ENCODE measurements at regions of chr16 and their contacts with region 1.

Region 1: DNA sequence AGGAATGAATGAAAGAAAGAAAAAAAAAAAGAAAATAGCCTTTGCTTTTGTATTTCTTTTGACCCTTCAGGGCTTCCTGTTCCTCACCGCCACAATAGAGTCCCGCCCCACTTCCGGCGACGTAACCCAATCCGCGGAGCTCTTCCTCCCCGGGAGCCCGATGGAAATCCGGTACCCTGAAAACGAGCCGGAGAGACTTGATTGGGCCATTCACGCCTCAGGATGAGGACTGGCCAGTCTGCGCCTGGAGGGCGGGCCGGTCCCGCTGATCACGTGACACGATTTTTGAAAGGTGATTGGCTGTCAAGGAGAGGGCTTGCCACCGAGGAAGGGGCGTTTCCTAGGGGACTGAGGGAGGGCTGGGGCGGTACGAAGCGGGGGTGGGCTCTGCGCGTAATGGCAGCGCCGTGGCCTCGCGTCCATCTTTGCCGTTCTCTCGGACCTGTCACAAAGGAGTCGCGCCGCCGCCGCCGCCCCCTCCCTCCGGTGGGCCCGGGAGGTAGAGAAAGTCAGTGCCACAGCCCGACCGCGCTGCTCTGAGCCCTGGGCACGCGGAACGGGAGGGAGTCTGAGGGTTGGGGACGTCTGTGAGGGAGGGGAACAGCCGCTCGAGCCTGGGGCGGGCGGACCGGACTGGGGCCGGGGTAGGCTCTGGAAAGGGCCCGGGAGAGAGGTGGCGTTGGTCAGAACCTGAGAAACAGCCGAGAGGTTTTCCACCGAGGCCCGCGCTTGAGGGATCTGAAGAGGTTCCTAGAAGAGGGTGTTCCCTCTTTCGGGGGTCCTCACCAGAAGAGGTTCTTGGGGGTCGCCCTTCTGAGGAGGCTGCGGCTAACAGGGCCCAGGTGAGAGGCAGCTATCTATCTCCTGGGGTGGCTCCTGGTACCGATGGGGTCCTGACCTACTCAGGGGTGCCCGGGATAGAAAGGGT is at the starts of genes PSME3IP1 and RSPRY1:
- DNase-seq: peak; percentile 86 to 100 (median 99)
- ATAC-seq: peak; percentile 92
- H3K4me3 ChIP-seq: peak within 1 kb of the TSS; percentile 95
- H3K4me3 Mint-ChIP-seq: peak within 1 kb of the TSS; percentile 93 to 100 (median 98)
- H3K27ac ChIP-seq: peak within 1 kb of the TSS; percentile 94
- H3K27ac Mint-ChIP-seq: peak within 1 kb of the TSS; percentile 93 to 99 (median 95)
- H3K4me1 ChIP-seq: peaks cover 20 to 24% of the 10 kb centered on the region in 2 donors
- H3K4me1 Mint-ChIP-seq: peaks cover 41 to 77% (median 59%) of the 10 kb centered on the region in 7 donors
- H3K27me3 ChIP-seq: no peaks in the 10 kb centered on the region
- H3K27me3 Mint-ChIP-seq: peaks cover 0 to 3% (median 0%) of the 10 kb centered on the region in 5 donors
- total RNA-seq, gene PSME3IP1: 109 to 159 (median 140) TPM
- total RNA-seq, gene RSPRY1: 24.1 to 40.5 (median 33.6) TPM

Region 2: DNA sequence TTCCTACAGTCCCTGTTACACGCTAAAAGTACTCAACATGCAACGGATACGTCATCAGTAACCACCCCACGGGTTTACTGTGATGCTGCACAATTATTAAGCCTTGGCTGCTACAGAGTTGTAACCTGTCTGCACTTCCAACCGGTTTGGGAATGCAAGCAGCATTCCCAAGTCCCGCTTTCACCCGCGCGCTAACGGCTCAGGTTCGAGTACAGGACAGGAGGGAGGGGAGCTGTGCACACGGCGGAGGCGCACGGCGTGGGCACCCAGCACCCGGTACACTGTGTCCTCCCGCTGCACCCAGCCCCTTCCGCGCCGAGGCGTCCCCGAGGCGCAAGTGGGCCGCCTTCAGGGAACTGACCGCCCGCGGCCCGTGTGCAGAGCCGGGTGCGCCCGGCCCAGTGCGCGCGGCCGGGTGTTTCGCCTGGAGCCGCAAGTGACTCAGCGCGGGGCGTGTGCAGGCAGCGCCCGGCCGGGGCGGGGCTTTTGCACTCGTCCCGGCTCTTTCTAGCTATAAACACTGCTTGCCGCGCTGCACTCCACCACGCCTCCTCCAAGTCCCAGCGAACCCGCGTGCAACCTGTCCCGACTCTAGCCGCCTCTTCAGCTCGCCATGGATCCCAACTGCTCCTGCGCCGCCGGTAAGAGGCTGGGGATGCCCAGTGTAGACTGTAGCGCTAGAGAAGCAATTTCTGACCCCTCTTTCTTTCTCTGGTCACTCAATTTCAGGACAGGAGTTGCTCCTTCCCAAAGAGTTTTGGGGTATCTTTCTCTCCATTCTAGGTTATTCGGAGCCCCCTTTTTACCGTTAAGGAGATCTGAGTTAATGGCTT is 577.9 kb before region 1 on chr16 and contains the start of gene MT2A:
- CTCF ChIA-PET with region 1: no interaction called
- POLR2A ChIA-PET with region 1: no interaction called
- intact Hi-C with region 1: loop called in 1 of 2 experiments (anchors 5 kb)
- DNase-seq: peak; percentile 70 to 89 (median 84)
- ATAC-seq: peak; percentile 88
- H3K4me3 ChIP-seq: peak within 1 kb of the TSS; percentile 97
- H3K4me3 Mint-ChIP-seq: peak within 1 kb of the TSS; percentile 85 to 100 (median 96)
- H3K27ac ChIP-seq: peak within 1 kb of the TSS; percentile 94
- H3K27ac Mint-ChIP-seq: peak within 1 kb of the TSS; percentile 85 to 99 (median 93)
- H3K4me1 ChIP-seq: peaks cover 29 to 34% of the 10 kb centered on the region in 2 donors
- H3K4me1 Mint-ChIP-seq: peaks cover 35 to 52% (median 47%) of the 10 kb centered on the region in 7 donors
- H3K27me3 ChIP-seq: no peaks in the 10 kb centered on the region
- H3K27me3 Mint-ChIP-seq: no peaks in the 10 kb centered on the region
- total RNA-seq, gene MT2A: 15.0 to 435 (median 32.8) TPM

Region 3: GRCh38 chr16:57013229-57013628 is 173.0 kb before region 1 on chr16:
- CTCF ChIA-PET with region 1: no interaction called
- POLR2A ChIA-PET with region 1: no interaction called
- intact Hi-C with region 1: loop called in 1 of 2 experiments (anchors 1 kb)
- DNase-seq: no peak
- ATAC-seq: no peak
- H3K4me3 ChIP-seq: peak overlapping the region; percentile 24
- H3K4me3 Mint-ChIP-seq: peak overlapping the region in 9 of 10 donors; percentile 36 to 87 (median 72)
- H3K27ac ChIP-seq: peak overlapping the region; percentile 80
- H3K27ac Mint-ChIP-seq: peak overlapping the region; percentile 88 to 98 (median 94)
- H3K4me1 ChIP-seq: peaks cover 81 to 83% of the 10 kb centered on the region in 2 donors
- H3K4me1 Mint-ChIP-seq: peaks cover 53 to 94% (median 82%) of the 10 kb centered on the region in 7 donors
- H3K27me3 ChIP-seq: no peaks in the 10 kb centered on the region
- H3K27me3 Mint-ChIP-seq: no peaks in the 10 kb centered on the region

Region 4: GRCh38 chr16:57213462-57213861 is 27.3 kb after region 1 on chr16:
- CTCF ChIA-PET with region 1: no interaction called
- POLR2A ChIA-PET with region 1: no interaction called
- intact Hi-C with region 1: no loop called
- DNase-seq: no peak
- ATAC-seq: no peak
- H3K4me3 ChIP-seq: no peak overlapping the region
- H3K4me3 Mint-ChIP-seq: no peak overlapping the region
- H3K27ac ChIP-seq: no peak overlapping the region
- H3K27ac Mint-ChIP-seq: peak overlapping the region in 1 of 9 donors; percentile 22
- H3K4me1 ChIP-seq: no peaks in the 10 kb centered on the region
- H3K4me1 Mint-ChIP-seq: peaks cover 0 to 5% (median 0%) of the 10 kb centered on the region in 7 donors
- H3K27me3 ChIP-seq: no peaks in the 10 kb centered on the region
- H3K27me3 Mint-ChIP-seq: no peaks in the 10 kb centered on the region

Region 5: DNA sequence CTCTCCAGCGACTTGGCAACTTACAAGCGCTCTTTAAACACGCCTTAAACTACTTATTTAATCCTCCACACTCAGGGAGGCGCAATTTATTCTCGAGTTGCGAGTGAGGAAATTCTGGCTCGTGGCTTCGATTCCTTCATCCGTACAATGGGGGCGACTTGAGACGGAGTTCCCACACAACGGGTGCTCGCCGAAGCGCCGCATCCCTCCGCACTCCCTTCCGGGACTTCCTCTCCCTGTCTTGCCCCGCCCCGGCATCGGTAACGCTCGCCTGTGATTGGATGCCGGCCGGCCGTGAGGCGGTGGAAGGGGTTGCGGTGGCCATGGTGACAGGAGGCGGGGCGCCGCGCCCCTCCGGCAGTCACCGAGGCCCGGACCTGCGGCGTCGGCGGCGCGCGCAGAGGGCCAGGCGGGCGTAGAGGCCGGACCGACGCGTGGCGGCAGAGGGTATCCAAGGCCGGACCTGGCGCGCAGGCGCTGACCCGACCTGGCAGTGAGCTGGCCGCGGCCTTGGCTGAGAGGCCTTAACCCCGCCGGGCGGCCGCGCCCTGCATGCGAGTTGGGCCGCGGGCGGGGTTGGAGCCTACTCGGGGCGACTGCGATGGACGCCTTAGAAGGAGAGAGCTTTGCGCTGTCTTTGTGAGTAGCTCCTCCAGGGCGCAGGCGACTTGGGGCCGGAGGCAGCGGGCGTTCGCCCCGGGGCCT is 58.7 kb after region 1 on chr16 and contains the start of gene ARL2BP:
- CTCF ChIA-PET with region 1: no interaction called
- POLR2A ChIA-PET with region 1: interaction called, 7 read pairs
- intact Hi-C with region 1: loop called (anchors 1 kb)
- DNase-seq: peak; percentile 90 to 98 (median 96)
- ATAC-seq: peak; percentile 97
- H3K4me3 ChIP-seq: peak within 1 kb of the TSS; percentile 44
- H3K4me3 Mint-ChIP-seq: peak within 1 kb of the TSS; percentile 81 to 97 (median 89)
- H3K27ac ChIP-seq: peak within 1 kb of the TSS; percentile 84
- H3K27ac Mint-ChIP-seq: peak within 1 kb of the TSS; percentile 88 to 97 (median 93)
- H3K4me1 ChIP-seq: peaks cover 5 to 6% of the 10 kb centered on the region in 2 donors
- H3K4me1 Mint-ChIP-seq: peaks cover 14 to 25% (median 17%) of the 10 kb centered on the region in 7 donors
- H3K27me3 ChIP-seq: no peaks in the 10 kb centered on the region
- H3K27me3 Mint-ChIP-seq: no peaks in the 10 kb centered on the region
- total RNA-seq, gene ARL2BP: 32.6 to 57.7 (median 37.9) TPM

Region 6: DNA sequence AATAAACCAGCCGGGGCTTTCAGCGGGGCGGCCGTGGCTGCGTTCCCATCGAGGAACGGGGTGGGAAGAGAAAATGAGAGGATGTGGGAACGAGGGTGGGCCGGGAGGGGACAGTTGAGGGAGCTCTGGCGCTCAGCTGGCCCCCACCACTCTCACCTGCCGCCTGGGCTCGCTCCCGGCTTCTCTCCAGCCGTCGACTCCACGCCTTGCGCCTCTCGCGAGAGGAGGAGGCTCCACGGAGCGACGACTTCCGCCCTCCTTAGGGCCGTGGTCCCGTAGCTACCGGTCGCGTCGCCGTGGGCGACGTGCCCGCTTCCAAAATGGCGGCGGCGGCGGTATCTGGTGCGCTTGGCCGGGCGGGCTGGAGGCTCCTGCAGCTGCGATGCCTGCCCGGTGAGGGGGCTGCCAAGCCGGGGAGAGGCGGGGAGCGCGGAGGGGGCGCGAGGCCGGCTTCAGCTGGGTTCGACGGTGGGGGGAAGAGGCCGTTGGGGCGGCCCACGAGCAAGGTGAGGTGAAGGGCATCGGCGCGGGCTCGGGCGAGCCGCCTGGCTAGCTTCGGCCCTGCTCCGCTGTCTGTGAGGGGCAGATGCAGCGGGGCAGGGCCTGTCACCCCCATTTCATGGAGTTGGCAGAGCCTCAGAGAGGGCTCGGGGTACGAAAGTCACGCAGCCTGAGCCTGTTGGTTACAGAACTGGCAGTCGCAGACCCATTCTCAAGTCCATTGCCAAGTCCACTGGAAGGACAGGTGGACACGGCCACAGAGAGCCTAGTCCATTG is 261.2 kb after region 1 on chr16 and contains the starts of genes CIAPIN1 and COQ9:
- CTCF ChIA-PET with region 1: no interaction called
- POLR2A ChIA-PET with region 1: interaction called, 5 read pairs
- intact Hi-C with region 1: loop called (anchors 1 kb)
- DNase-seq: peak; percentile 83 to 94 (median 88)
- ATAC-seq: peak; percentile 99
- H3K4me3 ChIP-seq: peak within 1 kb of the TSS; percentile 84
- H3K4me3 Mint-ChIP-seq: peak within 1 kb of the TSS; percentile 90 to 97 (median 92)
- H3K27ac ChIP-seq: peak within 1 kb of the TSS; percentile 87
- H3K27ac Mint-ChIP-seq: peak within 1 kb of the TSS; percentile 75 to 96 (median 90)
- H3K4me1 ChIP-seq: peaks cover 7 to 17% of the 10 kb centered on the region in 2 donors
- H3K4me1 Mint-ChIP-seq: peaks cover 15 to 64% (median 45%) of the 10 kb centered on the region in 7 donors
- H3K27me3 ChIP-seq: no peaks in the 10 kb centered on the region
- H3K27me3 Mint-ChIP-seq: no peaks in the 10 kb centered on the region
- total RNA-seq, gene CIAPIN1: 33.6 to 52.8 (median 35.8) TPM
- total RNA-seq, gene COQ9: 16.4 to 45.4 (median 36.6) TPM

Region 7: GRCh38 chr16:57576429-57576870 is 390.2 kb after region 1 on chr16:
- CTCF ChIA-PET with region 1: no interaction called
- POLR2A ChIA-PET with region 1: no interaction called
- intact Hi-C with region 1: no loop called
- DNase-seq: peak; percentile 55 to 83 (median 72)
- ATAC-seq: peak; percentile 87
- H3K4me3 ChIP-seq: no peak overlapping the region
- H3K4me3 Mint-ChIP-seq: no peak overlapping the region
- H3K27ac ChIP-seq: no peak overlapping the region
- H3K27ac Mint-ChIP-seq: peak overlapping the region in 1 of 9 donors; percentile 96
- H3K4me1 ChIP-seq: peaks cover 0 to 44% of the 10 kb centered on the region in 2 donors
- H3K4me1 Mint-ChIP-seq: peaks cover 0 to 45% (median 6%) of the 10 kb centered on the region in 7 donors
- H3K27me3 ChIP-seq: no peaks in the 10 kb centered on the region
- H3K27me3 Mint-ChIP-seq: peaks cover 0 to 6% (median 4%) of the 10 kb centered on the region in 5 donors

Region 8: DNA sequence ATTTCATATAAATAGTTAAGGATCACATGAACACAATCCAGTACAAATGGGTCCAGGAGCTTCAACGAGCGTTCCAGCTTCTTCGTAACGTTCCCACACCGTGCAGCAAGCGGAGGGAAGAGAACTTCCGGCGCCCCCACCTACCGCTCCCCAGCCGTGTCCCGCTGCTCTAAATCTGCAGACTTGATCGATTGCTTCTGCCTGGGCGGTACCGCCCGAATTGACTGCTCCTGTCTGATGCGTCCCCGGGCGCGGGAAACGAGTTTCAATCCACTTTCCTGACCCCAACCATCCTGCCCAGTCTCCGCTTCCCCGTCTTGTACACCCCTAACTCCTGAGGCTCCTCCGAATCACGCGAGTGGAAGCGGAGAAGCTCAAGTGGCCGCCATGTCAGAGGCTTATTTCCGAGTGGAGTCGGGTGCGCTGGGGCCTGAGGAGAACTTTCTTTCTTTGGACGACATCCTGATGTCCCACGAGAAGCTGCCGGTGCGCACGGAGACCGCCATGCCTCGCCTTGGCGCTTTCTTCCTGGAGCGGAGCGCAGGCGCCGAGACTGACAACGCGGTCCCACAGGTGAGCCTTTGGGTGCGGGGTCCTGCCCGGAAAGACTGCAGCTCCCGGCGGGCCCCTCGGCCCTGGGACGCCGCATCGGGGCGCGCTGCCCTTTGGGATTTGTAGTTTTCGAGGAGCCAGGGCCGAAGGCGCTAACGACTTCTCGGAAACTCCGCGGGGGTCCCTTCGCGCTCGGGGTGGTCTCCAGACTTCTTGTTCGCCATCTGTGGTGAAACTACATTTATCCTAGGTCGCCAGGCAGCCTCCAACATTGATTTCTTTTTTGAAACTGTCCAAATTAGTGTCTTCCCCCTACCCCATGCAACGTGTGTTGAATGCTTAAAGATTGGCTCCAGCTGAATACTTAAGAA is 1206.3 kb after region 1 on chr16 and contains the start of gene GINS3:
- CTCF ChIA-PET with region 1: no interaction called
- POLR2A ChIA-PET with region 1: no interaction called
- intact Hi-C with region 1: loop called in 1 of 2 experiments (anchors 10 kb)
- DNase-seq: peak; percentile 67 to 83 (median 81)
- ATAC-seq: peak; percentile 96
- H3K4me3 ChIP-seq: peak within 1 kb of the TSS; percentile 99
- H3K4me3 Mint-ChIP-seq: peak within 1 kb of the TSS; percentile 91 to 100 (median 98)
- H3K27ac ChIP-seq: peak within 1 kb of the TSS; percentile 80
- H3K27ac Mint-ChIP-seq: peak within 1 kb of the TSS; percentile 89 to 99 (median 95)
- H3K4me1 ChIP-seq: peaks cover 5 to 6% of the 10 kb centered on the region in 2 donors
- H3K4me1 Mint-ChIP-seq: peaks cover 3 to 28% (median 16%) of the 10 kb centered on the region in 7 donors
- H3K27me3 ChIP-seq: no peaks in the 10 kb centered on the region
- H3K27me3 Mint-ChIP-seq: peaks cover 0 to 21% (median 0%) of the 10 kb centered on the region in 5 donors
- total RNA-seq, gene GINS3: 0.66 to 13.3 (median 1.4) TPM

Measured in naive thymus-derived CD4-positive, alpha-beta T cell (primary cell).